OCI-LY7 (cell line): ENCODE measurements at regions of chr3 and their contacts with region 1.

Region 1: DNA sequence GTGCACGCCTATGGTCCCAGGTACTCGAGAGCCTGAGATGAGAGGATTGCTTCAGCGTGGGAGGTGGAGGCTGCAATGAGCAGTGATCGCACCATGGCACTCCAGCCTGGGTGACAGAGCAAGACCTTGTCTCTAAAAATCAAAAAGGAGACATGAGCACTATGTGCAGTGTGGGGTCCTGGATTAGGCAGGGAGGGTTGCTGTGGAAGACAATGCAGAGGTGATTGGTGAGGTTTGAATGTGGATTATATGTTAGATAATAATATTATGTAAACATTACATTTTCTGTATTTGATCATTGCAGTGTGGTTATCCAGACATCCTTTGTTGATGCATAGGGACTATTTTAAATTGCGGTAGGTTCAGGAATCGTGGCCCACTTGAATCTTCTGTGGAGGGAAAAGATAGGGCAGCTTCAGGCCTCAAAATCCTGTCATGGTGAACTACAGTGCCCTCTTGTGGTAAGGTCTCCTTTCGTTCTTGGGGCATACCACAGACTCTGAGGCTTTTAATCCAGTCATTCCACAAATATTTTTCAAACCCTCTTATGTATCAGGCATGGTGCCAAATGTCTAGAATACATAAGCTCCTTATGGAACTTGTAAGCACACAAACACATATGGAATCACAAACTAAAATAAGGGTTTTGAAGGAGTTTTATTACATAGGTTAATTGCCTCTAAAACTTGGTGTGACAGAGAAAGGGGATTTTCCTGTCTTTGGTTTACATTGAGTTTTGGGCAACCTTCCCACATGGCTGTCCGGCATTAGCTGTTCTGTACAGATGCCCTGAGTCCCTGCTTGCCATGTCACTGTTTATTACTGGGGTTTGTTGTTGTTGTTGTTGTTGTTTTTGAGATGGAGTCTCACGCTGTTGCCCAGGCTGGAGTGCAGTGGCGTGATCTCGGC is 37.7 kb downstream of the GPD1L start:
- DNase-seq: peak; percentile 84
- H3K4me3 ChIP-seq: no peak overlapping the region
- H3K27ac ChIP-seq: no peak overlapping the region
- H3K4me1 ChIP-seq: peaks cover 36% of the 10 kb centered on the region
- CTCF ChIP-seq: peak; percentile 95

Region 2: DNA sequence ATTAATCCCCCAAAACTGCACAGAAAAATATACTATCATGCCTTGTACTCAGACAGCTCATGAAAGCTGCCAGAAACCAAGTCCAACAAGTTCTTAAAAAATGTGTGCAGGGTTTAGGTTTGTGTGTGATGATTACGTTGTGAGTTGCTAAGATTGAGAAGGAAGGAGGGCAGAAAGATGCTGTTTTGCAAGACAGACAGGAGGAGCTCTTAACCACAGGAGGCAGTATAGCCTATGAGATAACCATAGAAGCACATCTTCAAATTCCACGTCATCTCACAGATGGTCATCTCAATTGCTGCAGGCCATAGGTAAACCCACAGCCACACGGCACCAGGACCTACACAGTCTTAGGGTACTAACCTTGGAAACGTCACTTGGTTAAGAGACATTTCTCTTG is 419.4 kb before region 1 on chr3:
- CTCF ChIA-PET with region 1: interaction called, 3 read pairs
- POLR2A ChIA-PET with region 1: interaction called, 4 read pairs
- intact Hi-C with region 1: loop called (anchors 5 kb)
- DNase-seq: peak; percentile 65
- H3K4me3 ChIP-seq: no peak overlapping the region
- H3K27ac ChIP-seq: no peak overlapping the region
- H3K4me1 ChIP-seq: peaks cover 9% of the 10 kb centered on the region
- CTCF ChIP-seq: peak; percentile 81

Region 3: GRCh38 chr3:31858439-31858838 is 285.7 kb before region 1 on chr3:
- CTCF ChIA-PET with region 1: no interaction called
- POLR2A ChIA-PET with region 1: no interaction called
- intact Hi-C with region 1: loop called (anchors 1 kb)
- DNase-seq: peak; percentile 74
- H3K4me3 ChIP-seq: no peak overlapping the region
- H3K27ac ChIP-seq: peak overlapping the region; percentile 53
- H3K4me1 ChIP-seq: peaks cover 95% of the 10 kb centered on the region
- CTCF ChIP-seq: peak; percentile 72

Region 4: DNA sequence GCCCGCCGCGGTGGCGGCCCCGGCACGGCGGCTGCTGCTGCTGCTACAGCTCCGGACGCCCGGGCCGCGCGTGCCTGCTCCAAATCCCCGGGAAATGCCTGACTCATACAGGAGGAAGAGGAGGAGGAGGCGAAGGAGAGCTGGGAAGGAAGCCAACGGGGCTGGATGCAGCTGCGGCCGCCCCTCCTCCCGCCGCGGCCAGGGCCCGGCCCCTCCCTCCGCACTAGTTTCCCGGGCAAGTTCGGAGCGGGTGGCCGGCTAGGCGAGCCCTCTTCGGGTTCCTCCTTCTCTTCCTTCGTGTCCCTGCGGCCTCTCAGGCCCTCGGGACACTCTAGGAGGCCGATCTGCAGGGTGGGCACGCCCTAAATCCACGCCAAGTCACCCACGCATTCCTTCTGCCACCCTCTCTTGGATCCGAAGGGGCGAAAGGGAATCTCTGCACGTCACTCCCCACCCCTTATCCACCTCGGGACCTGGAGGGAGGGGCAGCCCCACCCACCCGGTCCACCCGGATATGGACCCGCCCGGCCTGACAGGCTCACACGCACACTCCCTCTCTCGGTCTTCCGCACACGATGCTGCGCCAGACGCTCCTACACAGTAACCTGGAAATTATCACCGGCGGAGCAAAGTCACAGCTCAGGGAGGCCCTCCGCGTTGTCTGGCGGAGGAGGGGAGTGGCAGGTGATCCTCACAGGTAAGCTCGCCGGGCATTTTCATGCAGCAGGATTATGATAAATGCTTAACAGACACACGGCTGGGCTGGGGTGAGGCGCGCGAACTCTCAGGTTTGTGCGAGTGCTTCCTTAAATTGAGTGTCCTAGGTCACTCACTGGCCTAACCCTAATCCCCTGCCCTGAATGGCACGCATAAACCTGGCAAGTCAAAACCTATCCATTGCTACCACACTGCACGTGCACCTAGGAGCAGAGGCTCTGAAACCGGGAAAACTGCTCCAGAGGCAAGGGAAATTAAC is 162.6 kb before region 1 on chr3 and contains the starts of genes OSBPL10 and ZNF860:
- CTCF ChIA-PET with region 1: no interaction called
- POLR2A ChIA-PET with region 1: no interaction called
- intact Hi-C with region 1: no loop called
- DNase-seq: peak; percentile 81
- H3K4me3 ChIP-seq: peak within 1 kb of the TSS; percentile 91
- H3K27ac ChIP-seq: peak within 1 kb of the TSS; percentile 88
- H3K4me1 ChIP-seq: peaks cover 72% of the 10 kb centered on the region
- CTCF ChIP-seq: peak; percentile 11; the same call in 1 of the 2 replicates
- total RNA-seq, gene OSBPL10: 58.4 and 65.7 TPM in 2 replicates
- total RNA-seq, gene ZNF860: 13.8 and 20.3 TPM in 2 replicates

Region 5: DNA sequence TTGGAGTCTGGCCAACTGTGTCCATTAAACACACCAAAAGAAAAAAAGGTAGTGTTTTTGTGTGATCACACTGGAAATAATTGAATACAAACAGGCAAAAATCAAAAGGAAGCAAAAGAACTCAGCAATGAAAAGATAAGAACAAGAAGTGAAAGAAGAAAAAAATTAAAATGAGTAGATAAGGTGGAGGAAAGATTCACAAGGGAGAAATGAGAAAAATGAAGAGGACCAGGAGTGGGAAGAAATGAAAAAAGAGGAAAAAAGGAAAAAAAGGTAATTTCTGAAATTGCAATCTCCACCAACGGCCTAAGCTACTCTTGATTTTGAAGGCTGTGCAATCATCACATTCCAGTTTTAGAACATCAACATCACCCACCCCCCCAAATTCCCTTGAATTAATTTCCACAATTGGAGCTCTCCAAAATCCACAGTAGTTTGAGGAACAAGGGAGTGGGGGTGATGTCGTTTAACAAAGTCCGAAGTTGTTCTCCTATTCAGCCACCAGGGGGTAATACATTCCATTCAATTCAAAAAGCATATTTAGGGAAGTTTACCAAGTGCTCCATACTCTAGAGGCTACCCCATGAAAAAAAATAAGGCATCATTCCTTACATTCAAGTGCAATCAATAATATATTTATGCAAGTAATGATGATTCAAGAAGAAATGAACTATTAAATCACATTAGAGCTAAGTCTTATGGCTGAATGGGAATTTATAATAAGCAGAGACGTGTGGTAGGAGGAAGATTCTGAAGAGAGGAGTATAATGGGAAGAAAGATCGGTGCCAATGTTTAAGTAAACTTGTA is 125.1 kb before region 1 on chr3:
- CTCF ChIA-PET with region 1: interaction called, 8 read pairs
- POLR2A ChIA-PET with region 1: interaction called, 7 read pairs
- intact Hi-C with region 1: loop called (anchors 1 kb)
- DNase-seq: peak; percentile 72
- H3K4me3 ChIP-seq: no peak overlapping the region
- H3K27ac ChIP-seq: no peak overlapping the region
- H3K4me1 ChIP-seq: peaks cover 26% of the 10 kb centered on the region
- CTCF ChIP-seq: peak; percentile 97

Region 6: DNA sequence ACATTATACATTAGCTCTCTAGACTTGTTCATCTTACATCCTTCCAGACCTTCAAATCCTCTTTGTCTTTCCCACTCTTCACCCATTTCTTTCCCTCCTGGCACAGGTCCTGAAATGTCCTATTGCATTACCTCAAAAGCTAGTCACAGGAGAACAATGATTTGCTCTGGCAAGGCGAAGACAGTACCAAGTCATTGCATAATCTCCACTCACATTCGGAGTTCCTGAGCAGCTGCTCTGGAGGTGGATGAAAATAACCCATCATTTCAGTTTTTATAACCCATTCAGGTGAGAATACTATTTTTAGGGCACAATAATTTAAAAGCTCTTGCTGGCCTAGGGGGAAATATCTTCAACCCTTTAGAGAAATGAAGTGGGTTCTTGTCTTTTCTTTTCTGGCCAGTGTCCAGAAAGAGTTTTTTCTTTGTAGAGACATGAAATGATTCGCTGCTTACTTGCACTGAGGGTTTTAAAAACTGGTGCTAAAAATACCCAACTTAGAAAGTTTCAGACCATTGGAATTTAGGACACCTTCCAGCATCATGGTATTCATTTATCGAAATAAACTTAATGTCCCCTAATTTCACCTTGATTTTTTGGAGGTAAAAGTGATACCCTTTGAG is 449.9 kb after region 1 on chr3:
- CTCF ChIA-PET with region 1: no interaction called
- POLR2A ChIA-PET with region 1: no interaction called
- intact Hi-C with region 1: no loop called
- DNase-seq: no peak
- H3K4me3 ChIP-seq: no peak overlapping the region
- H3K27ac ChIP-seq: no peak overlapping the region
- H3K4me1 ChIP-seq: no peaks in the 10 kb centered on the region
- CTCF ChIP-seq: no peak